GM18951 (cell line): ENCODE measurements at regions of chr1 and their contacts with region 1.

Region 1: GRCh38 chr1:178542560-178543356 is 29.8 kb downstream of the TEX35 start:
- POLR2A ChIP-seq: no peak

Region 2: GRCh38 chr1:178644308-178645120 is 101.8 kb after region 1 on chr1:
- in situ Hi-C with region 1: no loop called
- POLR2A ChIP-seq: no peak

Region 3: GRCh38 chr1:178725603-178726517 is 183.1 kb after region 1 on chr1:
- in situ Hi-C with region 1: loop called (anchors 25 kb)
- POLR2A ChIP-seq: peak; percentile 34